ENCODE measurements at regions of chr11 and their contacts with region 1.

Region 1: DNA sequence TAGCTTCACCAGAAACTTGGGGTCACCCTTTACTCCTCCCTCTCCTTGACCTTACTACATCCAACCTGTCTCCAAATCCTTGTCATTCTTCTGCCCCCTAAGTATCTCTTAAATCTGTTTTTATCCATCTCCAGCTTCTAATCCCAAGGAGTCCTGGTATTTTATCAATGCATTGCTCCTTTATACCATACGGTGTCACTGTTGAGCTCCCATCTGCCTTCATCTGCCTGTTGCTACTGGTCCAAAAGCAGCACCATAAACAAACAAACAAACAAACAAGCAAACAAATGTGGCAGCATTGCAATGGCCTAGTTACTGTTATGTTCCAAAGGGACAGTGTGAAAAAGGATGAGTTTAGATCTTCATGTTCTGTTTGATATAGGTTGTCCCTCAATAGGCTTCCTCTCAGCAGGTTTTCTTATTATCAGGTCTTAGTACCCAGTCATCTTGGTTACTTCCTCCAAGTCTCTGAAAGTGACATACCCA is 34.2 kb downstream of the DNHD1 start:
- DNase-seq: no peak

Region 2: DNA sequence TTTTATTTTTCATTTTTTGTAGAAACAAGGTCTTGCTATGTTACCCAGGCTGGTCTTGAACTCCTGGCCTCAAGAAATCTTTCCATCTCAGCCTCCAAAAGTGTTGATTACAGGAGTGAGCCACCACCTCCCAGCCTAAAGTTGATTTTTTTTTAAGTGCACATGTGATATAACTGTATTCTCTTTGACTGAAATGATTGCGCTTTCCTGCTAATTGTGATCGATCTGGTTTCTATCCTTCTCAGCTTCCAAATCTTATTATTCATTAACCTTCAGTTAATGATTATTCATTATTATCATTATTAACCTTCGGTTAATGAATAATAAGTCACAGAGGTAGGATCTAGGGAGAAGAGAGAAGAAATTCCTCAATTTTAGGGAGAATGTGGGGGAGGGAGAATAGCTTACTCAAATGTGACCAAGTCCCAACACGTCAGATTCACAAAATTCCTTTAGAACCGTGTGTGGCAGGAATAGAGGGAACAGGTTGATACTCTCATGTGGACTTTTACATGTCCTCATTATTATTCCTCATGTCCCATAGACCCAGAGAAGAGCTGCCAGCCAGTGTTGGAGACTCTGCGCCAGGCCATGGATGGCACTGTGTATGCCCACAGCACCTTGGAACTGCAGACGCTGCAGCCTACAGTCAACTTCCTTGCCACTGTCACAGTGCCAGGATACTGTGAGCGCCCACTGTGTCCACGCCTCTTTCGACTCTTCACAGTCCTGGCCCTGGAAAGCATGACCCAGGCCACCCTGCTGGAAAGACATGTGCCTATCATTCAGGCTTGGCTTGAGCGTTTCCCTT is 25.0 kb after region 1 on chr11:
- intact Hi-C with region 1: no loop called
- DNase-seq: no peak

Region 3: GRCh38 chr11:6586434-6587359 is 55.4 kb after region 1 on chr11:
- intact Hi-C with region 1: loop called (anchors 5 kb)
- DNase-seq: no peak

Region 4: GRCh38 chr11:6603287-6604080 is 72.2 kb after region 1 on chr11 and contains the starts of genes ILK and RRP8:
- intact Hi-C with region 1: loop called (anchors 5 kb)
- DNase-seq: peak; percentile 98
- total RNA-seq, gene ILK: 229 TPM
- total RNA-seq, gene RRP8: 21.3 TPM

Region 5: GRCh38 chr11:6705905-6706535 is 174.7 kb after region 1 on chr11:
- intact Hi-C with region 1: loop called (anchors 2 kb)
- DNase-seq: no peak

Region 6: GRCh38 chr11:6968816-6969215 is 437.5 kb after region 1 on chr11:
- intact Hi-C with region 1: no loop called
- DNase-seq: no peak